OCI-LY7 (cell line): ENCODE measurements at regions of chr16 and their contacts with region 1.

Region 1: DNA sequence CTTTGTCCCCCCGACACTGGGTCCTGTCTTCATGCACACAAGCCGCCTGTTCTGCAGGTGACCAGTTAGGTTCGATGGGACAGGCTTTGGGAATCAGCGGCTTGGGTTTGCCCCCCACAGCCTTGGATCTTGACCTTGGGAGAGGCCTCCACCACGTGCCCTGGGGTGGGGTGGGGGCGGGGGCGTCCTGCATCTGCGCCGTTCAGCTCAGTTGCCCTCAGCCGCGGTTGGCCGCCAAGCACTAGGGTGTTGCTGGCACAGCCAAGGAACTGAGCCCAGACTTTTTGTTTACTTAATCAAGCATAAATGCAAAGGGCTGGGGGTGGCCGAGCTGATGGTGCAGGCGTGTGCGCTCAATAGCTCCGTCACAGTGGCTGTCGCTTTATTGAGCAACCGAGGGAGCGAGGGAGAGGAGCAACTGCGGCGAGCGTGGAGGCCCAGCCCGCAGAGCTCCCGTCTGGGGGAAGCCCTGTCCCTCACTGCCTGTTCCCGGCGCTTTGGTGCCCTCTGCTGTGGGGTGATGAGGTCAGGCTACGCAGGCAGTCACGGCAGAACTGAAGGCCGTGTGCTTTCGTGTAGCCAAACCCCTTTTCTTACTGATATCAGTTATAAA is 33.9 kb downstream of the JPH3 start:
- DNase-seq: peak; percentile 76
- H3K4me3 ChIP-seq: peak overlapping the region; percentile 61
- H3K27ac ChIP-seq: peak overlapping the region; percentile 39
- H3K4me1 ChIP-seq: peaks cover 19% of the 10 kb centered on the region
- CTCF ChIP-seq: peak; percentile 68

Region 2: GRCh38 chr16:87316923-87317749 is 319.0 kb before region 1 on chr16 and contains the start of gene C16orf95:
- CTCF ChIA-PET with region 1: no interaction called
- POLR2A ChIA-PET with region 1: no interaction called
- intact Hi-C with region 1: loop called (anchors 5 kb)
- DNase-seq: peak; percentile 96
- H3K4me3 ChIP-seq: peak within 1 kb of the TSS; percentile 90
- H3K27ac ChIP-seq: peak within 1 kb of the TSS; percentile 89
- H3K4me1 ChIP-seq: peaks cover 18% of the 10 kb centered on the region
- CTCF ChIP-seq: peak; percentile 78
- total RNA-seq, gene C16orf95: 4.2 and 8.5 TPM in 2 replicates

Region 3: DNA sequence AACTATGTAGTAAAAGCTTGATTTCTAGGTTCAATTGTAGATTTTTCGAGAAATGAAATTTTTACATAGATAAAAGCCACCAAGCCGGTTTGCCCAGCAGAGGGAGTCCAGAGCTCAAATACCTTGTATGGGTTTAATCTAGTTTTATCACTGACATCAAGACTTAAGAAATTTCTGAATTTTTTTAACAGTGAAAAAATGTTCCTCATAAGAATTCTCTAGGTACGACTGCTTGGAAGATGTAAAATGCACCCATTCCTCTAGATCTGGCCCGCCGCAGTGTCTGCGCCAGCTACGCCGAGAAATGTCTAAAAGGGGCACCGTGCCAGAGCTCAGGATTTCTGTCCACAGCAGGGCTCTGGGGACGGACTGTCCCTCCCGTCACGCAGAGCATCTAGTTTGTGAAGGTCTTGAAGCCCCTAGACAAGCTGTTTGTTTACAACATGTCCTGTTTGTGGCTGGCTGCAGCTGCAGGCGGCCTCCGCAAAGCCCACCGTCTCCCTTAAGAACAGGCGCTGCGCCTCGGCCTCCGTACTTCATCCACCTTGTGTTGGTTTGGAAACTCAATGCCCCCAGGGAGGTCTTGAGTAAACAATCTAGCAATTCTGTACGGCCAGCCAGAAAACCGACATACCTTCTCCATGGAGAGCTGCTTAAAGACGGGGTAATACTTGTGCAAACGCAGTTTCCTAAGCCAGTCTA is 219.2 kb before region 1 on chr16:
- CTCF ChIA-PET with region 1: no interaction called
- POLR2A ChIA-PET with region 1: no interaction called
- intact Hi-C with region 1: loop called (anchors 1 kb)
- DNase-seq: peak; percentile 36
- H3K4me3 ChIP-seq: no peak overlapping the region
- H3K27ac ChIP-seq: no peak overlapping the region
- H3K4me1 ChIP-seq: no peaks in the 10 kb centered on the region
- CTCF ChIP-seq: peak; percentile 79

Region 4: GRCh38 chr16:87461466-87461991 is 174.6 kb before region 1 on chr16:
- CTCF ChIA-PET with region 1: no interaction called
- POLR2A ChIA-PET with region 1: no interaction called
- intact Hi-C with region 1: loop called (anchors 1 kb)
- DNase-seq: peak; percentile 59
- H3K4me3 ChIP-seq: no peak overlapping the region
- H3K27ac ChIP-seq: no peak overlapping the region
- H3K4me1 ChIP-seq: peaks cover 15% of the 10 kb centered on the region
- CTCF ChIP-seq: peak; percentile 76

Region 5: GRCh38 chr16:87550496-87550961 is 85.6 kb before region 1 on chr16:
- CTCF ChIA-PET with region 1: no interaction called
- POLR2A ChIA-PET with region 1: no interaction called
- intact Hi-C with region 1: loop called (anchors 1 kb)
- DNase-seq: peak; percentile 41
- H3K4me3 ChIP-seq: no peak overlapping the region
- H3K27ac ChIP-seq: no peak overlapping the region
- H3K4me1 ChIP-seq: no peaks in the 10 kb centered on the region
- CTCF ChIP-seq: peak; percentile 93

Region 6: DNA sequence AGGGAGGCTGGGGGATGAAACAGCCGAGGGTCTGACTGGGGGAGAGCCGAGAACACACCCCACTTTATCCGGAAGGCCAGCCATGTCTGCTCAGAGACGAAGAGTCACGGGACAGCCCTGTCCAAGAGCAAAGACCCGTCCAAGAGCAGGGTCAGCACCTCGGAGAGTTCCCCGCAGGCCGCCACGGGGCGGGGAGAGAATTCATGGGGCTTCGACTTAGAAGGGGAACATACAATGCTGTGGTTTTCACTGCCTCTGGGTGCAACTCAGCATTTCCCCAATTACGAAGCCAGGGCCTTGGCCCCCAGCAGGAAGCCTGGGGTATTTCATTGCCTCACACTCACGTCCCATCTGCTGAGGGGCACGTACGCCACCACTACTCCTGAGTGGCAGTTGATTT is 25.4 kb after region 1 on chr16:
- CTCF ChIA-PET with region 1: no interaction called
- POLR2A ChIA-PET with region 1: no interaction called
- intact Hi-C with region 1: no loop called
- DNase-seq: peak; percentile 55
- H3K4me3 ChIP-seq: no peak overlapping the region
- H3K27ac ChIP-seq: no peak overlapping the region
- H3K4me1 ChIP-seq: no peaks in the 10 kb centered on the region
- CTCF ChIP-seq: peak; percentile 40; the same call in 1 of the 2 replicates

Region 7: GRCh38 chr16:87765776-87766484 is 129.8 kb after region 1 on chr16 and contains the start of gene KLHDC4:
- CTCF ChIA-PET with region 1: no interaction called
- POLR2A ChIA-PET with region 1: no interaction called
- intact Hi-C with region 1: loop called (anchors 2 kb)
- DNase-seq: peak; percentile 91
- H3K4me3 ChIP-seq: peak within 1 kb of the TSS; percentile 86
- H3K27ac ChIP-seq: peak within 1 kb of the TSS; percentile 75
- H3K4me1 ChIP-seq: peaks cover 62% of the 10 kb centered on the region
- CTCF ChIP-seq: no peak
- total RNA-seq, gene KLHDC4: 146 and 147 TPM in 2 replicates

Region 8: GRCh38 chr16:87877938-87878507 is 241.8 kb after region 1 on chr16:
- CTCF ChIA-PET with region 1: no interaction called
- POLR2A ChIA-PET with region 1: no interaction called
- intact Hi-C with region 1: loop called (anchors 5 kb)
- DNase-seq: peak; percentile 73
- H3K4me3 ChIP-seq: no peak overlapping the region
- H3K27ac ChIP-seq: no peak overlapping the region
- H3K4me1 ChIP-seq: peaks cover 11% of the 10 kb centered on the region
- CTCF ChIP-seq: peak; percentile 73